Lower leg skin (tissue), 4 donors: ENCODE measurements at regions of chr4 and their contacts with region 1.

Region 1: DNA sequence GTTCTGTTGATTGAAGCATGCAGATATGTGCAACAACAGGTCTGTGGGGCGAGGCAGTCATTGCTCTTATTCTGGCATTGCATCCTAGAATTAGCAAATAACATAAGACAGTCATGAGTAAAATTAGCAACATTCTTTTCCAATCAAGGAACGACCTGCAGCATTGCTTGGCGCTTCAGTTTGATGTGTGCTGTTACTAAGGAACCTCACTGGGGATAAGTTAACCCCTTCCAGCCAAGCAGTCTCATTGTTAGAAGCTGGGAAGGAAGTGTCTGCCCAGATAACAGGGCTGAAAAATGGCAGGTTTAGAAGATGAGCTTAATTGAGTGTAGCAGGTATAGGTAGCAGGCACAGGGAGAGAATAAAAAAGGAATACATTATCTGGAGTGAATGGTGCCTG is 55.4 kb downstream of the RBM46 start:
- DNase-seq: no peak
- H3K4me3 ChIP-seq: no peak overlapping the region
- CTCF ChIP-seq: no peak
- POLR2A ChIP-seq: no peak

Region 2: DNA sequence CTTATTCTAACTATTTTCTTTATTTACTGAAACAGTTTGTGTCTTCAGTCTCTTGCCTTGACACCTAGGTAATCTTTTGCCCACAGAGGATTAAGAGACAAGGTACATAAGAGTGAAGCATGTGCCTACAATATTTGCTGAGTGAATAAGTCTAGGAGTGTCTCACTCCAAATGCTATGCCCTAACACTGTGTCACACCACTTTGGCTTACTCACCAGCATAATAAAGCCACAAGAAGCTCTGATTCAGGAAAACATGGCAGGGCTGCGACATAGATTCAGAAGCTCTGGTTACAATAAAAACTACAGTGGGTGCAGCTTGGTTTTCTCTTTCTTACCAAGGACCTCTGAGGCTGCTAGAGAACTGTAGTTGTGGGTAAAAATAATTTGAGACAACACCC is 71.7 kb after region 1 on chr4:
- intact Hi-C with region 1: loop called (anchors 2 kb)
- DNase-seq: no peak
- H3K4me3 ChIP-seq: no peak overlapping the region
- CTCF ChIP-seq: no peak
- POLR2A ChIP-seq: no peak

Region 3: DNA sequence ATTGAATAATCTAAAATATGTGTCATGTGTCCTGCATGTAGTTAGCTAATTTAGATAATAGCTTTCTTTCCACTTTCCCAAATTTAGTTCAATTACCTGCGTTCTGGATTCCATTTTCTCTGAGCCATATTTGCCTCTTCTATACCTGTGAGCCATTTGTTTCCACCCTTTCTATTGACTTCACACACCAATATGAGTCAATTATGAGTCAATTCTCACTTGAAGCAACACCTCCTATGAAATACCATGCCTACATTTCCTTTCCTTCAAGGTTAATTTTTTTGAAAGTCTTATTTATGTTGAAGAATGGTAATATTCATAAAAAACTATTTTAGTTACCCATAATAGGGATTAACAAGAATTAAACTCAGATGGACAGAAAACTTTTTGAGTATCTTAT is 397.7 kb after region 1 on chr4:
- intact Hi-C with region 1: no loop called
- DNase-seq: no peak
- H3K4me3 ChIP-seq: no peak overlapping the region
- CTCF ChIP-seq: no peak
- POLR2A ChIP-seq: no peak

Region 4: DNA sequence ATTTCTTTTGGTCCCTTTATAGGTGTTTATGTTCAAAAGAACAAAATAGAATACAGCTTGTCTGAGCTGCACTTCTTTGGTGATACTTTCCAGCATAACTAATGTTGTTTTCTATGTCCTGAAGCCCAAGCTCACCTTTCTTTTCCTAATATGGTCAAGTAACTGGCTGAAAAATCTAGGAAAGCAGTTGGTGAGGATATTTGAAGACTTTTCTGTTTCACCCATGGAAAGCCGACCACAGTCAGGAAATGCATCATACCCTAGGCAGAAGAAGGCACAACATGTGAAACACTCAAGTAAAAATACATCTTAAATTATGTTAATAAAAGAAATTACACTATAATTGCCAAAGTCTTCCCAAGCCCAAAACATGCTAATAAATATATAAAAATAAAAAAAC is 1798.1 kb after region 1 on chr4:
- intact Hi-C with region 1: no loop called
- DNase-seq: no peak
- H3K4me3 ChIP-seq: no peak overlapping the region
- CTCF ChIP-seq: no peak
- POLR2A ChIP-seq: no peak